ENCODE measurements at regions of chr5 and their contacts with region 1.

Region 1: GRCh38 chr5:178626484-178627258 is at the start of gene CLK4:
- DNase-seq: peak; percentile 98
- ATAC-seq: peak; percentile 79
- H3K4me3 Mint-ChIP-seq: peak within 1 kb of the TSS; percentile 93
- H3K27ac Mint-ChIP-seq: peak within 1 kb of the TSS; percentile 98
- H3K4me1 Mint-ChIP-seq: peaks cover 25% of the 10 kb centered on the region
- H3K27me3 Mint-ChIP-seq: no peaks in the 10 kb centered on the region
- total RNA-seq, gene CLK4: 21.2 to 22.6 TPM

Region 2: GRCh38 chr5:178204182-178204894 is 422.3 kb before region 1 on chr5 and contains the start of gene HNRNPAB:
- CTCF ChIA-PET with region 1: interaction called, 3 read pairs
- POLR2A ChIA-PET with region 1: interaction called, 3 read pairs
- intact Hi-C with region 1: loop called in 1 of 2 experiments (anchors 1 kb)
- DNase-seq: peak; percentile 97
- ATAC-seq: peak; percentile 84
- H3K4me3 Mint-ChIP-seq: peak within 1 kb of the TSS; percentile 82
- H3K27ac Mint-ChIP-seq: peak within 1 kb of the TSS; percentile 97
- H3K4me1 Mint-ChIP-seq: peaks cover 30% of the 10 kb centered on the region
- H3K27me3 Mint-ChIP-seq: no peaks in the 10 kb centered on the region
- total RNA-seq, gene HNRNPAB: 258 to 336 TPM

Region 3: GRCh38 chr5:178612299-178612698 is 14.4 kb before region 1 on chr5:
- CTCF ChIA-PET with region 1: interaction called, 16 read pairs
- POLR2A ChIA-PET with region 1: no interaction called
- intact Hi-C with region 1: no loop called
- DNase-seq: no peak
- ATAC-seq: no peak
- H3K4me3 Mint-ChIP-seq: no peak overlapping the region
- H3K27ac Mint-ChIP-seq: no peak overlapping the region
- H3K4me1 Mint-ChIP-seq: peaks cover 7% of the 10 kb centered on the region
- H3K27me3 Mint-ChIP-seq: no peaks in the 10 kb centered on the region

Region 4: DNA sequence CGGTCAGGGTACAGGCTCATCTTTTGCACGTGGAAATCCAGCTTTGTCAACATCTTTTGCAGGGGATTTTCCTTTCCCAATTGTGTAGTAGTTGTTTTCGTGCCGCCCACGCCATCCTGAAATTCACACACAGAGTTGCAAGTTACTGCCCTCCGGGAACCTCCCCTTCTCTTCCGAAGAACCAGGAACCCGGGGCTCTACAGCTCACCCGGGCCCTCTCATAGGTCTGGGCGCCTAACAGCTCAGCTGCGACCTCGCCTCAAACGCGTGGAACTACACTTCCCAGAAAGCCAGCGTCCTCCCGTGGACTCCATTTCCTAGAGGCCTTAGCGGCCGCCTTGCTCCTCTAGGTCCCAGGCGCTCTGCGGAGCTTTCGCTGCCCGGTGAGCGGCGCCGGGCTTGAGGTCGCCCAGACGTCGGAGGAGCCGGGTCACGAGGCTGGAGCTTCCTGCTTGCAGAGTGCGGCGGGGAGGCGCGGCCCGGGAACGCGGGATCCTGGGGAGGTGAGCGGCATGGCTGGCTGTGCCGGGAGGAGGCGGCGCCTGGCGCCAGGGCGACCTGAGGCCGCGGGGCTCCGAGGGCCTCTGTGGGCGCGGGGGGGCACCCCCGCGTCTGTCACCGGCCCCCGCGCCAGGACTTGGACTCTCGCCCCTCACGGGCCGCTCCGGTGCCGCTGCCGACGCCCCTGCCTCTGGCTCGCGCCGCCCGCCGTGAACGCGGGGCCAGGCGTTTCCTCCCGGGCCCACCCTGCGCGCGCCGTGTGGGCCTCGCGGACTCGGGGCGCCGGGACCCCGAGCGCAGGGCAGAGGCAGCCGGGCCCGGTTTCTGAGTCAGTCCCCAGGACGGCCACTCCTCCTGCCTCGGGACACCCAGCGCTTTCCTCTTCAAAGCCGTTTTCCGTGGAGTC is 233.2 kb after region 1 on chr5 and contains the start of gene ZNF354B:
- CTCF ChIA-PET with region 1: no interaction called
- POLR2A ChIA-PET with region 1: no interaction called
- intact Hi-C with region 1: loop called in 1 of 2 experiments (anchors 1 kb)
- DNase-seq: peak; percentile 93
- ATAC-seq: peak; percentile 100
- H3K4me3 Mint-ChIP-seq: peak within 1 kb of the TSS; percentile 79
- H3K27ac Mint-ChIP-seq: peak within 1 kb of the TSS; percentile 89
- H3K4me1 Mint-ChIP-seq: peaks cover 24% of the 10 kb centered on the region
- H3K27me3 Mint-ChIP-seq: no peaks in the 10 kb centered on the region
- total RNA-seq, gene ZNF354B: 10.8 to 11.9 TPM

Region 5: DNA sequence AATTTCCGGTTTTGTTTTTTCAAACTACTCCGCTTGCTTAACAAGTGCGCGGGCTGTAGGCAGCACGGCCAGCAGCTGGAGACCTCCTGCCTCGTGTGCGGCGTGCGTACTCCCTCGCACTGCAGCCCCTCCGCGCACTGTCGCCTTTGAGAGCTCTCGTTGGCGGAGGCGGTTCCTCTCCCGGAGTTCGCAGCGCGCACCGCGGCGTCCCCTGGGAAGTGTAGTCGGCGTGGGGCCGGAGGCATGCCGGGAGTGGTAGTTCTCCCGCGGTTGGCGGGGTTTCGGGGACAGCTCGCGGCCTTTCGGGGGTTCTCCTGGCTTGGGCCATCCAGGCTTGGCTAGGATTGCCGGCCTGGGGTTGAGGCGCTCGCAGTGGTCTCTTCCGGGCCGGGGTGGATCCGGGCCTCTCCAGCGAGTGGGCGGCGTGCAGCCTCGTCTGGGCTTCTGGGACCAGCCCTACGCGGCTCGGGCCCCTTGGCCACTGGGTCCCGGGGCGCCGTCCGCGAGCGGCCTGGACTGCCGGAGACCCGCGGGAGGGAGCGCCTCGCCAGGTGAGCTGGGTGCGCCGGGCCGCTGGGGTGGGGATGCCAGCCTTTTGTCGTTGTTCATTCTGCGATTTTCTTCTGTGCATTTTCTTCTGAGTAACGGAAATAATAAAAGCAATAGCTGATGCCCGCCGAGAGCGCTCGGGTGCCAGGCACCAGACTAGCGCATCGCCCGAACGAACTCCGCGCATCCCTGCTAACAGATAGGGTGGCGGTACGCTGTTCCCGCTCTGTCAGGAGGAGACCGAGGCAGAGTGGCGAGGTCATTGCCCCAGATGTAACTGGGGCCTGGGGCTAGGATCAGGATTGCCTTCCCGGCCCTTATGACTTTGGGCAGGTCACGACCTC is 433.7 kb after region 1 on chr5 and contains the start of gene ZNF354C:
- CTCF ChIA-PET with region 1: no interaction called
- POLR2A ChIA-PET with region 1: no interaction called
- intact Hi-C with region 1: loop called in 1 of 2 experiments (anchors 2 kb)
- DNase-seq: peak; percentile 93
- ATAC-seq: peak; percentile 99
- H3K4me3 Mint-ChIP-seq: peak within 1 kb of the TSS; percentile 81
- H3K27ac Mint-ChIP-seq: peak within 1 kb of the TSS; percentile 90
- H3K4me1 Mint-ChIP-seq: peaks cover 16% of the 10 kb centered on the region
- H3K27me3 Mint-ChIP-seq: no peaks in the 10 kb centered on the region
- total RNA-seq, gene ZNF354C: 7.1 to 7.2 TPM

Region 6: DNA sequence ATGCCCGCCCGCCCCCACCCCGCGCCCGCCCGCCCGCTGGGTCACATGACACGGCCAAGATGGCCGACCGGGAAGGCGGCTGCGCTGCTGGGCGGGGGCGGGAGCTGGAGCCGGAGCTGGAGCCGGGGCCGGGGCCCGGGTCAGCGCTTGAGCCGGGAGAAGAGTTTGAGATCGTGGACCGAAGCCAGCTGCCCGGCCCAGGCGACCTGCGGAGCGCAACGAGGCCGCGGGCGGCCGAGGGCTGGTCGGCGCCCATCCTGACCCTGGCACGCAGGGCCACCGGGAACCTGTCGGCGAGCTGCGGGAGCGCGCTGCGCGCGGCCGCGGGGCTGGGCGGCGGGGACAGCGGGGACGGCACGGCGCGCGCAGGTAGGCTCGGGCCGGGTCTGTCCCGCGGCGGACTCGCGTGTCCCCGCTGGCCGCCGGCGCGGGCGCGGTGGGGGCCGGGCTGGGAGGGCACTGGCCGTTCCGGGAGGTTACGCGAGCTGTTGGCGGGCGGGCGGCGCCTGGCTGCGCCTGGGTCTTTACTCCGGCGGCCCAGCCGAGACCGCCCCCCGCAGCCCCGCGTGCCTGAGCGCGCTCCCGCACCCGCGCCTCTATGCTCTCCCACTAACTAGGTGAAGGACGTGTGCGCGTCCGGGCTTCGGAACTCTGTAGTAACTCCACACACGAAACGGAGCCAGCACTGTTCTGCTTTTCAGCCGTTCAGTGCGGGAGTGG is 924.0 kb after region 1 on chr5 and contains the start of gene RUFY1:
- CTCF ChIA-PET with region 1: no interaction called
- POLR2A ChIA-PET with region 1: no interaction called
- intact Hi-C with region 1: loop called in 1 of 2 experiments (anchors 1 kb)
- DNase-seq: peak; percentile 89
- ATAC-seq: peak; percentile 80
- H3K4me3 Mint-ChIP-seq: peak within 1 kb of the TSS; percentile 96
- H3K27ac Mint-ChIP-seq: peak within 1 kb of the TSS; percentile 99
- H3K4me1 Mint-ChIP-seq: peaks cover 37% of the 10 kb centered on the region
- H3K27me3 Mint-ChIP-seq: no peaks in the 10 kb centered on the region
- total RNA-seq, gene RUFY1: 29.6 to 33.8 TPM

Region 7: GRCh38 chr5:179732417-179732917 is 1105.8 kb after region 1 on chr5 and contains the start of gene MAML1:
- CTCF ChIA-PET with region 1: no interaction called
- POLR2A ChIA-PET with region 1: no interaction called
- intact Hi-C with region 1: loop called in 1 of 2 experiments (anchors 10 kb)
- DNase-seq: peak; percentile 99
- ATAC-seq: peak; percentile 95
- H3K4me3 Mint-ChIP-seq: peak within 1 kb of the TSS; percentile 92
- H3K27ac Mint-ChIP-seq: peak within 1 kb of the TSS; percentile 94
- H3K4me1 Mint-ChIP-seq: peaks cover 43% of the 10 kb centered on the region
- H3K27me3 Mint-ChIP-seq: no peaks in the 10 kb centered on the region
- total RNA-seq, gene MAML1: 25.4 to 32.6 TPM

Measured in activated CD4-positive, alpha-beta T cell treated with anti-CD3 and anti-CD28 coated beads for 36 hours (primary cell).